Heart right ventricle (tissue), 16 donors: ENCODE measurements at regions of chr1 and their contacts with region 1.

Region 1: DNA sequence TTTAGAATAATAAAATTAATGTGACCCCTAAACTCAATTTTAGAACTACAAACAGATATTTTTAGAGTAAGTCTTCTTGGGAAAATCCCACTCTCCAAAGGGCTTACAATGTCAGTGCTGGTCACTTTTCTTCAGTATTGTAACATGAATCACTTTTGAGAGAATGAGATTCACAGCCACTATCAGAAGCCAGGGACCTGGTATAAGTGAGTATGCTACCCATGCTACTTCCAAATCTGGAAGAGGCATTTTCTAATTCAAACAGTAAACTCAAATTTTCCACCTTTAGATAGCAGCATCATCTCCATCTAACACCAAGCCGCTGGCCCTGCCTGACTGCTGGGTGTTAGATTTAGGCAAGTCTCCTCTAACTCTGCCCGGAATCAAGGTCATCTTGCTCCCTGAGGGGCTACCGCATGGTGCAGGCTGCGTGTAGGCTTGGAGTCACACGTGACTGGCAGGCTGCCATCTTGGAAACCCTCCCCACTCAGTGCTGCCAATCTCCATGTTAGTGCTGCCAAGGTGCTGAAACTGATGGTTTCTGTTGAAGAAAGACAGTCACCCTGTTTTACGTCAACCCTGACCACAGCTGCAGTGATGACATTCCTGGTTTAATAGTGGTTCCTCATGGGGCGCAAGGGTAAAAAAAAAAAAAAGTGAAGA is 882.9 kb upstream of the B3GALT2 start:
- DNase-seq: peak; percentile 78 to 85
- ATAC-seq: peak; percentile 81 to 99 (median 95)
- H3K4me3 ChIP-seq: no peak overlapping the region
- H3K27ac ChIP-seq: peak overlapping the region; percentile 68 to 86 (median 79)
- H3K4me1 ChIP-seq: peaks cover 0 to 27% (median 11%) of the 10 kb centered on the region in 9 donors
- H3K27me3 ChIP-seq: no peaks in the 10 kb centered on the region
- CTCF ChIP-seq: no peak

Region 2: DNA sequence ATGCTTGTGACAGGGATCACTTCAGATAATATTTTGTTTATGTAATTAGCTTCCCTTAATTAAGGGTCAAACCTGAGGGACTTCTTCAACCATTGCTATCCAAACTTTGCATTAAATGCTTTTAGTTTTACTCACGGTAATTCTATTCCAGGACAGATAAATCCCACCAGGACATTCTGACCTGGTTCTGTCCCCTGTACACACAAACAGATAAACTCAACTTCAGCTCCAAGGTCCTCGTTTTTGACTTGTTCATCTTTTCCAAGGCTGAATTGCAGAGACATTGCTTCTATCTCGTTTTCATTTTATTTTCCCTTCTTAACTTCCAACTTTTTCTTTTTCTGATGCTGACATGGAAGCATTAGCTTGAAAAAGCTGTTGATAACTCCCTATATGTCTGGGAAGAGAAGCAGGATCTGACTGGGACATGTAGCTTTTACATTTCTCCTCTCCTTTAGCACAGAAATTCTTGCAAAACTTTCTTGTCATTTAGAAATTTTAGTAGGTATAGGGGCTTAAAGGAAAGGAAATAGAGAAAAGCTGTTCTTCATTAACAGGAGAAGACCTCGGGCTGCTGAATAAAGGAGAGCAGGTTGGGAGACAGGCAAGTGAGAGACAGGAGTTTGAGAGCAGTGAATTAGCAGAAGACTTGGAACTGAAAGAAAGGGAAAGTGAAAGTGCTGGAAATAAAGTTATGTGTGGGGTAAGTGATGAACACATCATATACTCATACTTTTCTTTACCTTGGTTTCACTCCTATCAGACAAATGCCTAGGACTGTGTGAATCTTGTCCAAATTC is 651.2 kb before region 1 on chr1:
- intact Hi-C with region 1: loop called in 2 of 10 experiments (anchors 10 kb)
- DNase-seq: no peak
- ATAC-seq: peak in 6 of 8 donors; percentile 61 to 77 (median 68)
- H3K4me3 ChIP-seq: peak overlapping the region in 9 of 10 donors; percentile 19 to 47 (median 40)
- H3K27ac ChIP-seq: peak overlapping the region in 7 of 10 donors; percentile 28 to 63 (median 35)
- H3K4me1 ChIP-seq: peaks cover 0 to 21% (median 5%) of the 10 kb centered on the region in 9 donors
- H3K27me3 ChIP-seq: no peaks in the 10 kb centered on the region
- CTCF ChIP-seq: no peak

Region 3: DNA sequence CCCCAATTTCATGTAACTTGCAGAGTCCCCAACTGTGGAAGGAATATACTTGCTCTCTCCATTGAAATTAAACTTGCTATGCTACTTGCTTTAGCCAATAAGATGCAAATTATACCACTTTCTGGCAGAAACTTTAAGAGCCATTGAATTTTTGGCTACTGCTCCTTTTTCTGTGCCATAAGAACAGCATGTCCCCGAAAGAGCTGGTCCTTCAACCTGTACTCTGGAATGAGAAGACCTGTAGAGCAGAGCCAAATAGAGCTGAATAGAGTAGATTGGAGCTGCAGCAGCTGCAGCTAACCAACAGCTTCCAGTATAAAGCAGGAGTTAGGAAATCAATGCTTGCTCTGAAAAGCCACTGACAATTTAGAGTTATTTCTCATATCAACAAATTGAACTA is 410.6 kb before region 1 on chr1:
- intact Hi-C with region 1: loop called in 1 of 10 experiments (anchors 2 kb)
- DNase-seq: no peak
- ATAC-seq: no peak
- H3K4me3 ChIP-seq: no peak overlapping the region
- H3K27ac ChIP-seq: peak overlapping the region in 4 of 10 donors; percentile 1 to 8 (median 5)
- H3K4me1 ChIP-seq: peaks cover 0 to 26% (median 0%) of the 10 kb centered on the region in 9 donors
- H3K27me3 ChIP-seq: no peaks in the 10 kb centered on the region
- CTCF ChIP-seq: no peak

Region 4: DNA sequence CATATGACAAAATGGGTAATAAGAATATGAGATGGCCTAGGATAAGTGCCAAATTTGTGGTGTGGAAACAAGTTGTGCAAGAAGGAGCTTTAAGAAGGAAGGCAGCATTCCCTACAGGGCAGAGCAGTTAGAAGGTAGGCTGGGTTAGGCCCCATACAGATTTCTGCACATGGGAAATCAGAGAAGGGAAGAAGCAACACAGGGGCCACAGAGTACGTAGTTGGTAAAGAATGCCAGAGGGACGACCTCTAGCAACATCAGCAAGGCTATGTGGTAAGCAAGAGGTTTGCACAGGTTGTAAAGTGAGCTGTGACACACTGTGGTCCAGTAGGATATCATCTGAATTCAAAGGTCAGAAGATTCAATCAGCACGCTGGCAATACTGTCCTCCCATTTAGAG is 117.3 kb before region 1 on chr1:
- intact Hi-C with region 1: loop called in 1 of 10 experiments (anchors 1 kb)
- DNase-seq: no peak
- ATAC-seq: peak in 4 of 8 donors; percentile 29 to 57 (median 36)
- H3K4me3 ChIP-seq: no peak overlapping the region
- H3K27ac ChIP-seq: peak overlapping the region in 8 of 10 donors; percentile 41 to 73 (median 52)
- H3K4me1 ChIP-seq: peaks cover 0 to 13% (median 0%) of the 10 kb centered on the region in 9 donors
- H3K27me3 ChIP-seq: no peaks in the 10 kb centered on the region
- CTCF ChIP-seq: no peak

Region 5: GRCh38 chr1:193971595-193971994 is 97.7 kb before region 1 on chr1:
- intact Hi-C with region 1: loop called in 3 of 10 experiments (anchors 5 to 10 kb)
- DNase-seq: no peak
- ATAC-seq: peak in 5 of 8 donors; percentile 33 to 86 (median 47)
- H3K4me3 ChIP-seq: no peak overlapping the region
- H3K27ac ChIP-seq: peak overlapping the region in 5 of 10 donors; percentile 5 to 57 (median 45)
- H3K4me1 ChIP-seq: no peaks in the 10 kb centered on the region
- H3K27me3 ChIP-seq: no peaks in the 10 kb centered on the region
- CTCF ChIP-seq: no peak